IMR-90 (cell line): ENCODE measurements at regions of chr16 and their contacts with region 1.

Region 1: DNA sequence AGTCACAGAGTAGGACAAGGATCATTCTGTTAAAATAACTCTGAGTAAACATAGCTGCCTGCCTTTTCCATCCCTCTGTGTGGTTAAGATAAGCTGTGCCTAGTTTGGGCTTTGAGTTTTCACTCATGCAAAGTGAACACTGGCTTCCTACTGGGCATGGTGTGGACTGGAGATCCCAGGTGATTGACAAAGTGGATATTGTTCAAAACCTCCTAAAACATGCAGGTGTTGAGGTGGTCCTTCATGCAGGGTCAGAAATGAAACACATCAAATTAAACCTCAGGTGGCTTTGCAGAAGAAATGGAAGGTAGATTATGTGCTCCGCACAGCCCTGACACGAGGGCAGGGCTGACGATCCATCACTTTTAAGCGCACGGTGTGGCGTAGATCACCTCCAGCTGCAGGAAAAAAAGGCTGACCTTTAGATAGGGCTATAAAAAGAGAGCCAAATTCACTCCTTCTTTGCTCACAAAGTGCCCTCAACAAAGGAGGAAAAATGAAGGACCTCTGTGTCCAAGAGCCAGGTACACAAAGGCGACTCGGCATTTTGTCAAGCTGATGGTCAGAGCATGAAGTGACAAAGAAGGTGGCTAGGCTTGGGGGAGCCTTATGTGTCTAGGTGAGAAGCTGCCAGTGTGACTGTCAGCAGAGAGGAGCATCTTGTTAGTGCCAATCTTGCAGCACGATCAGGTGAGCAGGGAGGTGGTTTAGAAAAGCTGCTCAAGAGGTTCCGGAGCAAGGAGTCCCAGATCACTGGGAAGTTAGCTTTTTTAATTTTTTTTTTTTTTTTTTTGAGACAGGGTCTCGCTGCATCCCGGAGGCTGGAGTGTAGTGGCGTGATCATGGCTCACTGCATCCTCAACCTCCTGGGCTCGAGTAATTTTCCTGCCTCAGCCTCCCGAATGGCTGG is 19.9 kb upstream of the ITPRIPL2 start:
- DNase-seq: no peak
- ATAC-seq: no peak
- H3K4me3 ChIP-seq: no peak overlapping the region
- H3K27ac ChIP-seq: no peak overlapping the region
- H3K4me1 ChIP-seq: peaks cover 4% of the 10 kb centered on the region; the same call in 1 of the 2 replicates
- H3K27me3 ChIP-seq: no peaks in the 10 kb centered on the region
- CTCF ChIP-seq: no peak
- POLR2A ChIP-seq: no peak
- RAD21 ChIP-seq: no peak

Region 2: GRCh38 chr16:19105891-19106624 is 12.2 kb after region 1 on chr16:
- CTCF ChIA-PET with region 1: no interaction called
- POLR2A ChIA-PET with region 1: no interaction called
- dilution Hi-C with region 1: no loop called
- in situ Hi-C with region 1: no loop called
- intact Hi-C with region 1: loop called (anchors 2 kb)
- DNase-seq: peak; percentile 34
- ATAC-seq: peak; percentile 59
- H3K4me3 ChIP-seq: no peak overlapping the region
- H3K27ac ChIP-seq: no peak overlapping the region
- H3K4me1 ChIP-seq: peaks cover 9% of the 10 kb centered on the region
- H3K27me3 ChIP-seq: no peaks in the 10 kb centered on the region
- CTCF ChIP-seq: no peak
- POLR2A ChIP-seq: no peak
- RAD21 ChIP-seq: no peak

Region 3: GRCh38 chr16:19179546-19180490 is 85.9 kb after region 1 on chr16:
- CTCF ChIA-PET with region 1: no interaction called
- POLR2A ChIA-PET with region 1: interaction called, 13 read pairs
- dilution Hi-C with region 1: no loop called
- in situ Hi-C with region 1: no loop called
- intact Hi-C with region 1: no loop called
- DNase-seq: peak; percentile 33
- ATAC-seq: no peak
- H3K4me3 ChIP-seq: no peak overlapping the region
- H3K27ac ChIP-seq: no peak overlapping the region
- H3K4me1 ChIP-seq: no peaks in the 10 kb centered on the region; the same call in 1 of the 2 replicates
- H3K27me3 ChIP-seq: peaks cover 6% of the 10 kb centered on the region
- CTCF ChIP-seq: peak; percentile 47
- POLR2A ChIP-seq: no peak
- RAD21 ChIP-seq: peak; percentile 49